Right ventricle myocardium inferior (tissue), 1 donor: ENCODE measurements at regions of chr9 and their contacts with region 1.

Region 1: GRCh38 chr9:123742009-123742767 is 187.7 kb downstream of the DENND1A start:
- DNase-seq: peak; percentile 70
- ATAC-seq: peak; percentile 94

Region 2: DNA sequence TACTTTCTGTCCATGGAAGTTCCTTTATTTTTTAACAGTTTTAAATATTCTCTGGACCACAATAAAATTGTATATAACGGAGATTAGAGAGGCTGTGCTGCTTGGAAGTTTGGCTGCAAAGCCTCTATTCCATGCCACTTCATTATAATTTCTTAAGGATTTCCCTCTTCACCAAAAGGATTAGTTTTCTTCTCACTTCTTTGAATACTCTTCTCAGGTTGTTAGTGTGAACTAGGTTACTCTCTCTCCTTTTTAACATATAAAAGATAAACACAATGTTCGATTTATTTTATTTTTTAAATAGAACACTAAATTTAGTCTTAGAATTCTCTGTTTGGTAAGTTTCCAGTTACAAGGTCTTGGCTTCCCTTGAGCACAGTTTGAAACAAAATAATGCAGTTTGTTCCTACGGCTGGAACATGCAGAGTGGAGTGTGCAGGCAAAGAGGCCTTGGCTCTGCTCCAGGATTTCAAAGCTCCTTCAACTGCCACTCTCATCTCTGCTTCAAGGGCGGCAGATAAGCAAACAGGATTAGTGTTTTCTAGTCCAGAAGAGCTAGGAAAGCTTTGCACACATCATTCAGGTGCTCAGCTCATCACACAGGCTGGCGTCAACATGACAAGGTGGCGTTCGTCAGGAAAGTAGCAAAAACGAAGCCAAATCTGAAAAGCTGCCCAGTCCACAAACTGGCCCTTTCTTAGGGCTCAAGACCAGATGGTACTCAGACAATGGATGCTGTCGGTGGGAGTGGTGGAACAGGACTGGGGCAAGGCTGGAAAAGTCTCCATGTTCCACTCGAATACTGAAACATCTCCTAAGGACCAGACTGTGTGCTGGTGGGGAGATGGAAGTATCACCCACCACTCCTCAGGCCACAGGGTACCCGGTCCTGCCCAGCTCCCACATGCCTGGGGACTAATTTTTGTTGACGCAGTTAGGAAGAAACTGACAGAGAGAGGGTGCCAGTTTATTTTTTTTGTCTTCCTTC is 99.6 kb before region 1 on chr9:
- intact Hi-C with region 1: loop called (anchors 5 kb)
- DNase-seq: no peak
- ATAC-seq: peak; percentile 83

Region 3: GRCh38 chr9:123784518-123784917 is 42.3 kb after region 1 on chr9:
- intact Hi-C with region 1: no loop called
- DNase-seq: no peak
- ATAC-seq: no peak